ENCODE measurements at regions of chr11 and their contacts with region 1.

Region 1: GRCh38 chr11:36069576-36070212 is 125.8 kb downstream of the LDLRAD3 start:
- DNase-seq: peak in 1 of 2 donors; percentile 40
- H3K4me3 ChIP-seq: no peak overlapping the region
- H3K27ac ChIP-seq: peak overlapping the region in 1 of 2 donors; percentile 0
- H3K4me1 ChIP-seq: no peaks in the 10 kb centered on the region
- H3K27me3 ChIP-seq: no peaks in the 10 kb centered on the region
- CTCF ChIP-seq: peak in 2 of 3 donors; percentile 38 to 47
- POLR2A ChIP-seq: no peak

Region 2: DNA sequence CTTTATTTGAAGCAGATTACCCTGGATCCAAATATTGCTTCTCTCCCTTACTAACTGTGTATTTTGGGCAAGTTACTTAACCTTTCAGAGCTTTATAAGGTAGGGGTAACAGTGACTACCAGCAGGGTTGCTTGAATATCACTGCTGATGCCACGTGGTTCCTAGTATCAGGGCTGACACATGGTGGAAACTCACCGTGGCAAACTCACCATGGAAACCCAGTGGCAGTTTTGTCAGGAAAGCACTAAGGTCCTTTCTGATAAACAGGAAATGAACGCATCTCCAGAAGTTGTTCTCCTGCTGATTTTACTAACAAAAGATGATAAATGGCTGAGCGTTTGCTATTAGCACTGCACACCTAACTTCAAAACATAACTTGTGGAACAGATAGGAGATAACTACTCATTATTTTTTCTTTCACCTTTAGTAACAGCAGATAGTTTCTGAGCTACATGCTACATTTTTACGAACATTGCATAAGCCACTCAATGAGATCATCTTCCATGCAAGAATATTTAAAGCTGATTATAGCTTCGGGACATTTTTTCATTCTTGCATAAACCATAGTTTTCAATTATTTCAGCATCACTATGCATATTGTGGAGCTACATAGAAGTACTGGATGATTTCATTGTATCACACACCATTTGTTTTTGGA is 588.0 kb after region 1 on chr11:
- intact Hi-C with region 1: loop called (anchors 5 kb)
- DNase-seq: no peak
- H3K4me3 ChIP-seq: no peak overlapping the region
- H3K27ac ChIP-seq: no peak overlapping the region
- H3K4me1 ChIP-seq: no peaks in the 10 kb centered on the region
- H3K27me3 ChIP-seq: no peaks in the 10 kb centered on the region
- CTCF ChIP-seq: no peak
- POLR2A ChIP-seq: no peak

Region 3: DNA sequence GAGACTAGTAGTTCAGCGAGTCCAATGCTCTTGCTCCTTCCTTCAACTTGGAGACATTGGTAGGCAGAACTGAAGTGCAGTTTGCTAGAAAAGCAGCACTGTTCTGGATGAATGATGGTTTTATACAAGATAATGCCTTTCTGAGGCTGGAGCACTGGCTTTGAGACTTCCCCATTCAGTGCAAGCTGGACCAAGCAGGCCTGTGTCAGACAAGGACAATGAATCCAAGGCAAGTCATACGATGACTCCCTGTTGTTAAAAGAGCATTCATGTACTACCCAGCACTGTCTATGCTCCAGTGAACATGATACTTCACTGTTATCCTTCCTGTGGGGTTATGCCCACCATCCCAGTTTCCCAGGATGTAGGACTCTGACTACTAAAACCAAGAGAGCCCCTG is 770.7 kb after region 1 on chr11:
- intact Hi-C with region 1: no loop called
- DNase-seq: no peak
- H3K4me3 ChIP-seq: no peak overlapping the region
- H3K27ac ChIP-seq: no peak overlapping the region
- H3K4me1 ChIP-seq: no peaks in the 10 kb centered on the region
- H3K27me3 ChIP-seq: no peaks in the 10 kb centered on the region
- CTCF ChIP-seq: no peak
- POLR2A ChIP-seq: no peak

Measured in breast epithelium (tissue), 4 donors.